ENCODE measurements at regions of chr2 and their contacts with region 1.

Region 1: GRCh38 chr2:200901459-200902072 is 12.4 kb downstream of the NIF3L1 start:
- DNase-seq: peak; percentile 92 to 96 (median 94)
- H3K4me3 ChIP-seq: no peak overlapping the region
- H3K27ac ChIP-seq: no peak overlapping the region
- H3K4me1 ChIP-seq: peaks cover 0 to 4% (median 0%) of the 10 kb centered on the region in 4 experiments
- H3K27me3 ChIP-seq: no peaks in the 10 kb centered on the region

Region 2: DNA sequence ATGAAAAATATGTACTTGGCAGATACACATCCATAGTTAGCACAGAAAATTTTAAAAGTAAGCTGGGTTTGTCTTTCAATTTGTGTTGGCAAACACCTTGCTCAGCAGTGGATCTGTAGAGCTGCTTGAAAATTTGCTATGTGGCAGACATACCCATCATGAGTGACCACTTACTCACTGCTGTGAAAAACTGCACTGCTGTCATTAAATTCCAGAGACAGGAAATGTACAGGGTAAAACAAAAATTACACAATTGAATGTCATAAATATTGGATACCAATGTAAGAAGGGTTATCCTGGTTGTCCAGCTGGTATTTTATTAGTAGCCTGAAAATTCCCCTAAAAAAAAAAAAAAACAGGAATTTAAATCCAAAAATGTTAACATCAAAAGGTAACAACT is 12.1 kb after region 1 on chr2:
- CTCF ChIA-PET with region 1: interaction called, 11 read pairs
- POLR2A ChIA-PET with region 1: no interaction called
- DNase-seq: no peak
- H3K4me3 ChIP-seq: no peak overlapping the region
- H3K27ac ChIP-seq: no peak overlapping the region
- H3K4me1 ChIP-seq: no peaks in the 10 kb centered on the region
- H3K27me3 ChIP-seq: no peaks in the 10 kb centered on the region

Region 3: GRCh38 chr2:200985799-200986198 is 84.2 kb after region 1 on chr2:
- CTCF ChIA-PET with region 1: no interaction called
- POLR2A ChIA-PET with region 1: no interaction called
- DNase-seq: no peak
- H3K4me3 ChIP-seq: no peak overlapping the region
- H3K27ac ChIP-seq: no peak overlapping the region
- H3K4me1 ChIP-seq: no peaks in the 10 kb centered on the region
- H3K27me3 ChIP-seq: no peaks in the 10 kb centered on the region

Region 4: DNA sequence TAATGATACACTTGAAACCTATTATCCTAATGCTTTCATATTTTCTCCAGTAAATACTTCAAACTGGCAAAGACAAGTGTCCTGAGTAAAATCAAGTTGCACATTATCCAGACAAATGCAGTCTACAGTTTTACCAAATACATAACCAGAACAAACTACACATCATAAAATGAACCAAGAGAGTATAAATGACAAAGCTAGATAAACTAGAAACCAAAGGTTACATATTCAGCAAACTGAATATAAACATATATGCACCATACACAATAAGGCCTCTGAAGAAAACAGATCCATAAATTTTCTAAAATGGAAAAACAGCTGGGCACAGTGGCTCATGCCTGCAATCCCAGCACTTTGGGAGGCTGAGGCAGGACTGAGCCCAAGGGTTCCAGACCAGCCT is 123.0 kb after region 1 on chr2:
- CTCF ChIA-PET with region 1: no interaction called
- POLR2A ChIA-PET with region 1: no interaction called
- DNase-seq: no peak
- H3K4me3 ChIP-seq: no peak overlapping the region
- H3K27ac ChIP-seq: no peak overlapping the region
- H3K4me1 ChIP-seq: peaks cover 0 to 11% (median 5%) of the 10 kb centered on the region in 4 experiments
- H3K27me3 ChIP-seq: no peaks in the 10 kb centered on the region

Region 5: GRCh38 chr2:201118121-201118960 is 216.8 kb after region 1 on chr2:
- CTCF ChIA-PET with region 1: interaction called, 17 read pairs
- POLR2A ChIA-PET with region 1: no interaction called
- DNase-seq: peak; percentile 94 to 95 (median 94)
- H3K4me3 ChIP-seq: peak overlapping the region; percentile 88 to 100 (median 95)
- H3K27ac ChIP-seq: peak overlapping the region; percentile 93 to 97
- H3K4me1 ChIP-seq: peaks cover 33 to 69% (median 62%) of the 10 kb centered on the region in 4 experiments
- H3K27me3 ChIP-seq: no peaks in the 10 kb centered on the region

Region 6: DNA sequence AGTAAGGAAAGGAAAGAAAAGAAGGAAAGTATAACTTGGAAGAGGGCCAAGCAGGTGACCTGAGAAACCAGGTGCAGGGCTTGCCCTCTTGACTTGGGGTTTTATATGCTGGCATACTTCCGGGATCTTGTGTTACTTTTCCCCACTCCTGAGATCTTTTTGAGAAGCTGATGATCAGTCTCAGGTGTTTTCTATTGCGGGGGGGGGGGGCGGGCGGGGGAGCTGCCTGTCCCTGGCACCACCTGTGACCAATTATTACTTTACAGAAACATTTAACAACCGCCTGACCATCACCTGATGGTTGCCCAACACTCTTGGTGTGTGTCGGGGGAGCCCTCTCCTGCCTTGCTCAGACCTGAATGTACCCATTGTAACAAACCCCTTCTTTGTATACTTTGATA is 274.5 kb after region 1 on chr2:
- CTCF ChIA-PET with region 1: interaction called, 43 read pairs
- POLR2A ChIA-PET with region 1: interaction called, 4 read pairs
- DNase-seq: no peak
- H3K4me3 ChIP-seq: no peak overlapping the region
- H3K27ac ChIP-seq: no peak overlapping the region
- H3K4me1 ChIP-seq: peaks cover 0 to 15% (median 6%) of the 10 kb centered on the region in 4 experiments
- H3K27me3 ChIP-seq: no peaks in the 10 kb centered on the region

Region 7: GRCh38 chr2:201182650-201183364 is 281.2 kb after region 1 on chr2 and contains the start of gene CASP10:
- CTCF ChIA-PET with region 1: interaction called, 43 read pairs
- POLR2A ChIA-PET with region 1: no interaction called
- DNase-seq: peak; percentile 92 to 95 (median 95)
- H3K4me3 ChIP-seq: peak within 1 kb of the TSS; percentile 14 to 100 (median 79)
- H3K27ac ChIP-seq: peak within 1 kb of the TSS; percentile 78 to 90
- H3K4me1 ChIP-seq: peaks cover 29 to 46% (median 30%) of the 10 kb centered on the region in 4 experiments
- H3K27me3 ChIP-seq: no peaks in the 10 kb centered on the region

Measured in common myeloid progenitor, CD34-positive (primary cell).